CD4-positive, alpha-beta T cell (primary cell): ENCODE measurements at regions of chr3 and their contacts with region 1.

Region 1: DNA sequence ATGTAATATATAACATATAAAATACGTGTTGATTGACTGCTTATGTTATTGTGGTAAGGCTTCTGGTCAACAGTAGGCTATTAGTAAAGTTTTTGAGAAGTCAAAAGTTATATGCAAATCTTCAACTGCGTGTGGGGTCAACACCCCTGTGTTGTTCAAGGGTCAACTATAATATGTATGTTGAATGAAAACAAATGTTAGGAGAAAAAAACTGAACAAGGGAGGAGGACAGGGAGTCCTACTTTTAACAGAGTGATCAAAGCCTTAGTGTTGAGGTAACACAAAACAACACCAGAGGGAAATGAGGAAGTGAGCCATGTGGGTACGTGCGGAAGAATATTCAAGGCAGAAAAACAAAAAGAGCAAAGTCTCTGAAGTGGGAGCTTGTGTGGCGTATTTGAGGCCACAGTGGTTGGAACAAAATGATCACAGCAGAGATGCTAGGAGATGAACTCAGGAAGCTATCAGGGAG is 62.5 kb downstream of the SFMBT1 start:
- DNase-seq: peak in 13 of 14 experiments; percentile 16 to 86 (median 40)
- ATAC-seq: peak; percentile 90
- H3K4me3 ChIP-seq: no peak overlapping the region
- H3K4me3 Mint-ChIP-seq: peak overlapping the region; percentile 71
- H3K27ac ChIP-seq: peak overlapping the region in 1 of 2 donors; percentile 43
- H3K27ac Mint-ChIP-seq: peak overlapping the region; percentile 75
- H3K4me1 ChIP-seq: peaks cover 3% of the 10 kb centered on the region
- H3K4me1 Mint-ChIP-seq: peaks cover 61% of the 10 kb centered on the region
- H3K27me3 ChIP-seq: no peaks in the 10 kb centered on the region
- H3K27me3 Mint-ChIP-seq: no peaks in the 10 kb centered on the region
- CTCF ChIP-seq: no peak

Region 2: DNA sequence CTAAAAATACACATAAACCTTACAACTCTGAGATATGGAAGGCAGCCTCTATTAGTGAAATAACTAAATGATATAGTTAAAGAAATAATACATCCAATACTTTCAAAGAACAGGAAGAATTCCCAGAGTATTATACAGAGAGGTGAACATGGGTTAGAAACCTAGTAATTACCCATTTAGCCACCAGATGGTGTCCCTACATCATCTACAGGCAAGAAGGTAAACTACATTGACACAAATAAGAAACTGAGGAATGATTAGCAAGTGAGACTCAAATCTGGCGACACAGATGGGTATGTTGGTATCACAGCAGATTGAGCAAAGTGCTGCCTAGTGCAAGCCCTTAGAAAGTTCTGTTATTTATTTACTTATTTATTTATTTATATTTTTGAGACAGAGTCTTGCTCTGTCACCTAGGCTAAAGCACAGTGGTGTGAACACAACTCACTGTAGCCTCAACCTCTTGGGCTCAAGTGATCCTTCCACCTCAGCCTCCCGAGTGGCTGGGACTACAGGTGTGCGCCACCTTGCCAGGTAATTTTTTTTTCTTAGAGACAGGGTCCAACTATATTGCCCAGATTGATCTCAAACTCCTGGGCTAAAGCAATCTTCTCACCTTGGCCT is 240.8 kb before region 1 on chr3:
- CTCF ChIA-PET with region 1: no interaction called
- POLR2A ChIA-PET with region 1: interaction called, 3 read pairs
- intact Hi-C with region 1: loop called in 1 of 2 experiments (anchors 5 kb)
- DNase-seq: peak in 3 of 14 experiments; percentile 39 to 57 (median 54)
- ATAC-seq: peak; percentile 46
- H3K4me3 ChIP-seq: no peak overlapping the region
- H3K4me3 Mint-ChIP-seq: no peak overlapping the region
- H3K27ac ChIP-seq: no peak overlapping the region
- H3K27ac Mint-ChIP-seq: no peak overlapping the region
- H3K4me1 ChIP-seq: no peaks in the 10 kb centered on the region
- H3K4me1 Mint-ChIP-seq: no peaks in the 10 kb centered on the region
- H3K27me3 ChIP-seq: no peaks in the 10 kb centered on the region
- H3K27me3 Mint-ChIP-seq: no peaks in the 10 kb centered on the region
- CTCF ChIP-seq: peak; percentile 72

Region 3: GRCh38 chr3:52851348-52851747 is 132.0 kb before region 1 on chr3:
- CTCF ChIA-PET with region 1: no interaction called
- POLR2A ChIA-PET with region 1: no interaction called
- intact Hi-C with region 1: loop called in 1 of 2 experiments (anchors 5 kb)
- DNase-seq: peak in 5 of 14 experiments; percentile 12 to 62 (median 34)
- ATAC-seq: peak; percentile 69
- H3K4me3 ChIP-seq: no peak overlapping the region
- H3K4me3 Mint-ChIP-seq: no peak overlapping the region
- H3K27ac ChIP-seq: no peak overlapping the region
- H3K27ac Mint-ChIP-seq: no peak overlapping the region
- H3K4me1 ChIP-seq: no peaks in the 10 kb centered on the region
- H3K4me1 Mint-ChIP-seq: no peaks in the 10 kb centered on the region
- H3K27me3 ChIP-seq: no peaks in the 10 kb centered on the region
- H3K27me3 Mint-ChIP-seq: no peaks in the 10 kb centered on the region
- CTCF ChIP-seq: peak; percentile 55

Region 4: GRCh38 chr3:52934630-52935530 is 48.5 kb before region 1 on chr3:
- CTCF ChIA-PET with region 1: interaction called, 10 read pairs
- POLR2A ChIA-PET with region 1: interaction called, 5 read pairs
- intact Hi-C with region 1: loop called in 1 of 2 experiments (anchors 5 kb)
- DNase-seq: peak; percentile 20 to 79 (median 34)
- ATAC-seq: peak; percentile 99
- H3K4me3 ChIP-seq: no peak overlapping the region
- H3K4me3 Mint-ChIP-seq: peak overlapping the region; percentile 14
- H3K27ac ChIP-seq: no peak overlapping the region
- H3K27ac Mint-ChIP-seq: peak overlapping the region; percentile 12
- H3K4me1 ChIP-seq: no peaks in the 10 kb centered on the region
- H3K4me1 Mint-ChIP-seq: peaks cover 17% of the 10 kb centered on the region
- H3K27me3 ChIP-seq: no peaks in the 10 kb centered on the region
- H3K27me3 Mint-ChIP-seq: no peaks in the 10 kb centered on the region
- CTCF ChIP-seq: peak; percentile 92

Region 5: GRCh38 chr3:53030619-53031449 is 47.5 kb after region 1 on chr3:
- CTCF ChIA-PET with region 1: interaction called, 3 read pairs
- POLR2A ChIA-PET with region 1: interaction called, 17 read pairs
- intact Hi-C with region 1: loop called in 1 of 2 experiments (anchors 5 kb)
- DNase-seq: peak; percentile 33 to 74 (median 53)
- ATAC-seq: peak; percentile 94
- H3K4me3 ChIP-seq: no peak overlapping the region
- H3K4me3 Mint-ChIP-seq: peak overlapping the region; percentile 53
- H3K27ac ChIP-seq: no peak overlapping the region
- H3K27ac Mint-ChIP-seq: peak overlapping the region; percentile 88
- H3K4me1 ChIP-seq: peaks cover 36% of the 10 kb centered on the region
- H3K4me1 Mint-ChIP-seq: peaks cover 65% of the 10 kb centered on the region
- H3K27me3 ChIP-seq: no peaks in the 10 kb centered on the region
- H3K27me3 Mint-ChIP-seq: no peaks in the 10 kb centered on the region
- CTCF ChIP-seq: no peak

Region 6: GRCh38 chr3:53045518-53046170 is 62.3 kb after region 1 on chr3 and contains the start of gene SFMBT1:
- CTCF ChIA-PET with region 1: interaction called, 15 read pairs
- POLR2A ChIA-PET with region 1: interaction called, 63 read pairs
- intact Hi-C with region 1: loop called (anchors 1 to 2 kb)
- DNase-seq: peak; percentile 55 to 93 (median 73)
- ATAC-seq: peak; percentile 50
- H3K4me3 ChIP-seq: peak within 1 kb of the TSS; percentile 91
- H3K4me3 Mint-ChIP-seq: peak within 1 kb of the TSS; percentile 95
- H3K27ac ChIP-seq: peak within 1 kb of the TSS; percentile 72 to 88
- H3K27ac Mint-ChIP-seq: peak within 1 kb of the TSS; percentile 99
- H3K4me1 ChIP-seq: peaks cover 33% of the 10 kb centered on the region
- H3K4me1 Mint-ChIP-seq: peaks cover 52% of the 10 kb centered on the region
- H3K27me3 ChIP-seq: no peaks in the 10 kb centered on the region
- H3K27me3 Mint-ChIP-seq: peaks cover 3% of the 10 kb centered on the region
- CTCF ChIP-seq: no peak
- total RNA-seq, gene SFMBT1: 54.3 to 55.9 TPM